Sciatic nerve (tissue), 2 donors: ENCODE measurements at regions of chr21 and their contacts with region 1.

Region 1: GRCh38 chr21:17775431-17776126 is 43.6 kb downstream of the C21orf91 start:
- DNase-seq: no peak
- ATAC-seq: no peak

Region 2: DNA sequence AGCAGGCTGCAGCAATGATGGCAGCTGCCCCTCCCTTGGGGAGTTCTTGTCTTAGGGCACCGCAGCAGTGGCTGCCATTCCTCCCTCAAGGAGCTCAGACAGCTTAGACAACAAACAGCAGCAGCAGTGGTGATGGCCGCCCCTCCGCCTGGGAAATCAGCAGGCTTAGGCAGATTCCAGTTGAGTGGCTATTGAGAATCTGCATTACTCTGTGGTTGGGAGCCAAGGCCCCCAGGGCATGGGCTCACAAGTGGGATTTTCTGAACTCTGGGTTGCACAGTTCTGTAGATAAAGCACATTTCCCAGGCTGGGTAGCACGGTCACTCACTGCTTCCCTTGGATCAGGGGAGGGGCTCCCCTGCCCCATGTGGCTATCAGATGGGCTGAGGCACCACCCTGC is 1908.7 kb after region 1 on chr21:
- intact Hi-C with region 1: loop called (anchors 5 kb)
- DNase-seq: no peak
- ATAC-seq: no peak